ENCODE measurements at regions of chr2 and their contacts with region 1.

Region 1: DNA sequence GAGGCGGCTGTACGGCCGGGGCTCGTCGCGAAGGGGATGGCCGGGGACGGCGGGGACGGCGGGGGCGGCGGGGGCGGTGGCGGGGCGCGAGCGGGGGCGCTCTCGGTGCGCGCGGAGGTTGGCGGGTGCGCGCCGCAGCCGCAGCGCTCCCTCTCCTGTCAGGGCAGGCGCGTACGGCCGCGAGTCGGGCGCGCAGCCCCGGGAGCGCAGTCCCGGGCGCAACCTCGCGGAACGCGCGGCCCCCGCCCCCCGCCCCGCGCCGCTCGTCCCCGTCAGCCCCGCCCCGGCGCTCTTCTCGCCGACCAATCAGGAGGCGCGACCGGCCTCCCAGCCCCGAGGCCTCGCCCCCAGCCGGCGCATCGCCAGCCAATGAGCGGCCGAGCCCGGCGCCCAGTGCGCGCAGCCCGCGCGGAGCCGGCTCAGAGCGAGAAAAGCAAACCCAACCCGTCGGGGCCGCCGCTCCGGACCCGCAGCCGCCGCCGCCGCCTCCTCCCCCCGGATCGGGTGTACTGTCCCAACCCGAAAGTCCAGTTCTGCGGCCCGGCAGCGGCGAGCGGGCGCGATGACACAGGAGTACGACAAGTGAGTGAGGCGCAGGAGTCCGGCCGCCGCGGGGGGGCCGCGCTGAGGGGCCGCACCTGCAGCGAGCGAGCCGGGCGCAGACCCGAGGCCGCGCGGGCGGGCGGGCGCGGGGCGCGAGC is at the start of gene GRHL1:
- DNase-seq: peak; percentile 85
- ATAC-seq: peak; percentile 86
- H3K4me3 ChIP-seq: peak within 1 kb of the TSS; percentile 83 to 94 (median 84)
- H3K27ac ChIP-seq: peak within 1 kb of the TSS; percentile 76
- H3K4me1 ChIP-seq: peaks cover 69% of the 10 kb centered on the region
- H3K27me3 ChIP-seq: peaks cover 0 to 9% of the 10 kb centered on the region in 2 experiments; a peak in 1 of 5 replicates
- CTCF ChIP-seq: no peak
- EP300 ChIP-seq: no peak
- POLR2A ChIP-seq: 0 out of 4 replicates have a peak, but pooled peaks of 1 of the 2 experiments have one; percentile 46
- RAD21 ChIP-seq: peak; percentile 56
- total RNA-seq, gene GRHL1: 10.6 and 12.0 TPM in 2 replicates

Region 2: DNA sequence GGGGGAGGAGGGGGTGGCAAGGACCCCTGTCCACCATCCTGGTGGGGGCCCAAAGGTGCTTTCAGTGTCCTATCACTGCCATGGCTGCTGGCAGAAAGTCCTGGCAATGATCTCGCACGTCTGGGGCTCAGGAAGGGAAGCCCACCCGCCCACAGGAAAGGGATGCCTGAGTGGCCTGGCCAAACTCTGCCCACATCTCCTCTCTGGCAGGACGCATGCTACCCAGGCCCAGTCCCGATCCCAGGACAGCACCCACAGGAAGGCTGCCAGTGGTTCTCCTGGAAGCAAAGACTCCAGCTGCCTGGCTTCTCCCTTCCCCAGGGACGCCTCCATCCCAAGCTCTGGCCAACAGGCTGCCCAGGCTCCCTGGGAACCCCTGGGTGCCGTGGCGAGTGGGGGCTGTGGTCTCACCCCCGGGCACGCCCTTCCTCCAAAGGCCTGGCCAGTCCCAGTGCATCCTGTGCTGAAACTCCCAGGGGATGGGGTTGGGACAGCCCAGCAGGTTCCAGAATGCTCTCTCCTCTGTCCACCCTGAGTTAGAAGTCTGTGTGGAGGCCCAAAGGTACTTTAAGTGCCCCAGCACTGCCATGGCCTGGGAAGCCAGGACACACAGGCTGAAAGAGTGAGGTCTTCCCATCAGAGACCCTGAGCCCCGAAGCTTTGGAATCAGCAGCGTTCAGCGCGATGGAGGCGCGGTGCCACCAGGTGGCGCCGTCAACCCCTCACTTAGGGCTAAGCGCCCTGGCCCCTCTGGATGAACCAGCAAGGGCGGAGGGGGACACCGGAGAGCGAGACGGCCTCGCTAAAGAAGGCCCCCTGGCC is 137.9 kb before region 1 on chr2:
- CTCF ChIA-PET with region 1: no interaction called
- POLR2A ChIA-PET with region 1: no interaction called
- in situ Hi-C with region 1: no loop called
- intact Hi-C with region 1: loop called (anchors 5 kb)
- DNase-seq: peak; percentile 56
- ATAC-seq: peak; percentile 90
- H3K4me3 ChIP-seq: peak overlapping the region; percentile 11 to 60 (median 32); a peak in 2 of 6 replicates
- H3K27ac ChIP-seq: no peak overlapping the region
- H3K4me1 ChIP-seq: peaks cover 23% of the 10 kb centered on the region; the same call in 1 of the 2 replicates
- H3K27me3 ChIP-seq: peaks cover 8 to 72% of the 10 kb centered on the region in 2 experiments; a peak in 4 of 5 replicates
- CTCF ChIP-seq: peak; percentile 99
- EP300 ChIP-seq: no peak
- POLR2A ChIP-seq: no peak
- RAD21 ChIP-seq: peak; percentile 93

Region 3: DNA sequence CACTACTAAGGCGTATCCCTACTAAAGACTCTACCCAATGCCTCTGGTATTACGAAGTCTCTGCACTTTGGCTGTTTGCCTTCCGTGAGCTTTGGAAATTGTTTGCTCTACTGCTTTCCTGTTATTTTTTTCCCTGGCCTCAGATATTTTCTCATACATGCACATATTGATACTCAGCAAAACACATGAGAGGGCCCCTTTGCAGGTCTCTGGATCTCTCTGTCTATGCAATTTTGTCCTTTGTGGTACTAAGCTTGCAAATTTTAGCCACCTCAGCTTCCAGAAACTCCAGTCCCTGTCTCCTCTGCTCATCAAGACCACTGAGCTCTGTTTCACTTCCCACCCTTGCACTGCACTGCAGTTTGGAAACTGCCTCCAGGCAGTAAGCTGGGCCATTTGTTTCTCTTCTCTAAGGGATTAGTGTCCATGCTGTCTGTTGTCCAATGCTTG is 61.6 kb before region 1 on chr2:
- CTCF ChIA-PET with region 1: no interaction called
- POLR2A ChIA-PET with region 1: no interaction called
- in situ Hi-C with region 1: no loop called
- intact Hi-C with region 1: loop called (anchors 1 kb)
- DNase-seq: peak; percentile 92
- ATAC-seq: peak; percentile 98
- H3K4me3 ChIP-seq: peak overlapping the region in 2 of 3 experiments; percentile 17 to 44; a peak in 3 of 6 replicates
- H3K27ac ChIP-seq: peak overlapping the region; percentile 92
- H3K4me1 ChIP-seq: peaks cover 27% of the 10 kb centered on the region
- H3K27me3 ChIP-seq: no peaks in the 10 kb centered on the region
- CTCF ChIP-seq: no peak
- EP300 ChIP-seq: peak in 1 of 2 experiments; percentile 70; a peak in 1 of 4 replicates
- POLR2A ChIP-seq: no peak
- RAD21 ChIP-seq: no peak

Region 4: DNA sequence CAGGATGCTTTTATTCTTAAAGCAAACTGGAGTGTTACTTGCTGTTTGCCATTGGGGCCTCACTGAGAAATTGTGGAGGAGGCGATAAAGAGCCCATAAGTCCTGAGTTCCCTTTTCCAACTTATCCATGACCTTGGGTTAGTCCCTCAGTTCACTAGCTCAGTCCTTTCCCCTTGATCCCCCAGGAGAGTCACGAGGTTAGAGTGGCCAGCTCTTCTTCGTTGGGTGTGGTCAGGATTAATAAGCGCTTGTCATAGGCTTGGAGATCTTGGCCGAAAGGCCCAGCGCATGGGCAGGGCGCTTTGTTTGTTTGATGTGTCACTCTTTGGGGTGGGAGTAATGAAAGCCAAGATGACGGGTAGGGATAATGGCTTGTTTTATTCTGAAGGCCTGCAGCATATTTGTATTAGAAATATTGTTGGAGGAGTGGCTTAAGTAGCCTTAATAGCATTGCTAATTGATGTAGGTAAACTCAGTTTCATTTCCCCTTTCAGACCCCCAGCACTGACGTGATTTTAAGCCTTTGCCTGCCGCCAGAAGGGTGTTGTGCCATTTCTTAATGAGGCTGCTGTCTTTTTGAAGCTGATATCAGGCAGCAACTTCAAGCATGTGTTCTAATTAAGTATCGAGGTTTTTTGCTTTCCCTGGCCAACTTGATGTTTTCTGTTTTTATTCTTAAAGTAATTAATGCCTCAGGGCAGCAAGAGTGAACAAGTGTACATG is 15.8 kb after region 1 on chr2:
- CTCF ChIA-PET with region 1: no interaction called
- POLR2A ChIA-PET with region 1: no interaction called
- in situ Hi-C with region 1: no loop called
- intact Hi-C with region 1: no loop called
- DNase-seq: no peak
- ATAC-seq: no peak
- H3K4me3 ChIP-seq: no peak overlapping the region
- H3K27ac ChIP-seq: no peak overlapping the region
- H3K4me1 ChIP-seq: no peaks in the 10 kb centered on the region
- H3K27me3 ChIP-seq: no peaks in the 10 kb centered on the region
- CTCF ChIP-seq: no peak
- EP300 ChIP-seq: no peak
- POLR2A ChIP-seq: no peak
- RAD21 ChIP-seq: no peak

Measured in HepG2 (cell line).